PC-3 (cell line): ENCODE measurements at regions of chr22 and their contacts with region 1.

Region 1: DNA sequence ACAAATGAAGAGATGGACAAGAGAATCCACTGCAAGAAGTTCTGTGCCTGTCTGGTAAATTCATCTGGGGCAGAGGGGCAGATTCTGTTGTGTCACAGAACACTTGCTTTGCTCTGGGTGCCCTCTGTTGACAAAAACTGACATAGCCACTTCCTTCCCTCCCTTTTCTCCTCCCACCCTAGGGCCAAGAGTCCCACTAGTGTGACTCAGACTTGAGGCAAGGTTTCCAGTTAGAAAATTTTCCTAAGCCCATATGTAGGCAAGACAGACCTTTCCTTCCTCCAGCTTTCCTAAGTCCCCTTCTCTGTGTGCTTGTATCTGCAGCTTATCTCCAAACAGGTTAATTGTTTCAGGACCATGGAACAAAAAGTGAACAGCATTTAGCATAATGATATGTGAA is 106.8 kb downstream of the RBFOX2 start:
- DNase-seq: peak; percentile 84
- ATAC-seq: peak; percentile 98
- H3K4me3 ChIP-seq: no peak overlapping the region
- H3K27ac ChIP-seq: peak overlapping the region; percentile 11; the same call in 1 of the 2 replicates
- H3K4me1 ChIP-seq: peaks cover 13% of the 10 kb centered on the region
- H3K27me3 ChIP-seq: no peaks in the 10 kb centered on the region
- CTCF ChIP-seq: peak; percentile 71

Region 2: DNA sequence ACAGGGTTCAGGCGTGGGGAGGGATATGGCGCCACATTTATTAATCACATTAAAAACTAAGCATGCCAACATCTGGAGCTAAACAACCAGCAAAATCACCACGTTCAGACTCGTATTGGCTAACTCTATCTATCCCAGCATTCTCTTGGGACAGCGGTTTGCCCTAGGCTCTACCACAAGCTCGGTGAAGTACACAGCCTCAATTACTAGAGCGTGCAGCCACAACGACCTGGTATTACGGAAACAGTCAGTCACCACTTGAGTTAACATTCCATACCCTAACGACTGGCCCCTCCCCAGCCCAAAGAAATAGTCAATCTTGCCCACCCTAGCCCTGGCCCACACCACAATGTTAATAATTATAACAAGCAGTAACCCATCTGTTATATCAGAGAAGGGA is 172.0 kb before region 1 on chr22:
- CTCF ChIA-PET with region 1: no interaction called
- POLR2A ChIA-PET with region 1: no interaction called
- intact Hi-C with region 1: loop called (anchors 10 kb)
- DNase-seq: no peak
- ATAC-seq: no peak
- H3K4me3 ChIP-seq: no peak overlapping the region
- H3K27ac ChIP-seq: no peak overlapping the region
- H3K4me1 ChIP-seq: no peaks in the 10 kb centered on the region
- H3K27me3 ChIP-seq: no peaks in the 10 kb centered on the region
- CTCF ChIP-seq: no peak

Region 3: DNA sequence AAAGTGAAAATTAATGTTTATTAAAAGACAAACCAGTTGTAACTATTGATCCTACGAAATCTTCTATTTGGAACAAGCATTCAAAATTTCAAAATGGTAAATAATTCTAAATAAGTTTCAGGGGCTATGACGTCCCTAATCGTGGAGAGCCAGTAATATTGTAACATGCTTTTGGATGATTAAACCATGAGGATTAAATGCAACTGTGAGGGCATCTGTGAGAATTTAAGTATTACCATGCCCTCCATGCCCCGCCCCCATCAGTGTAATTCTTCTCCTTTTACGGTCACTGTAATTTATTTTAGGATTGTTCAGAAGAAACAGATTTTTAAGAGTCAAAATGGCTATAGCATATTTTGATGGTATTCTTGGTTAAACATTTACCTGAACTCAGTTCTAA is 70.9 kb before region 1 on chr22:
- CTCF ChIA-PET with region 1: no interaction called
- POLR2A ChIA-PET with region 1: no interaction called
- intact Hi-C with region 1: no loop called
- DNase-seq: no peak
- ATAC-seq: no peak
- H3K4me3 ChIP-seq: no peak overlapping the region
- H3K27ac ChIP-seq: no peak overlapping the region
- H3K4me1 ChIP-seq: no peaks in the 10 kb centered on the region
- H3K27me3 ChIP-seq: no peaks in the 10 kb centered on the region
- CTCF ChIP-seq: no peak